Right cardiac atrium (tissue), 5 donors: ENCODE measurements at regions of chr7 and their contacts with region 1.

Region 1: GRCh38 chr7:23105644-23106056 is at the start of gene KLHL7:
- DNase-seq: peak; percentile 97 to 99 (median 99)
- ATAC-seq: peak; percentile 99 to 100
- H3K4me3 ChIP-seq: peak within 1 kb of the TSS; percentile 90
- H3K27ac ChIP-seq: peak within 1 kb of the TSS; percentile 95
- H3K4me1 ChIP-seq: peaks cover 5% of the 10 kb centered on the region
- H3K27me3 ChIP-seq: no peaks in the 10 kb centered on the region
- total RNA-seq, gene KLHL7: 68.8 to 106 (median 83.2) TPM

Region 2: GRCh38 chr7:23175938-23176337 is 70.3 kb after region 1 on chr7:
- intact Hi-C with region 1: loop called (anchors 5 to 10 kb)
- DNase-seq: no peak
- ATAC-seq: no peak
- H3K4me3 ChIP-seq: no peak overlapping the region
- H3K27ac ChIP-seq: no peak overlapping the region
- H3K4me1 ChIP-seq: no peaks in the 10 kb centered on the region
- H3K27me3 ChIP-seq: no peaks in the 10 kb centered on the region